CD8-positive, alpha-beta T cell (primary cell): ENCODE measurements at regions of chr10 and their contacts with region 1.

Region 1: DNA sequence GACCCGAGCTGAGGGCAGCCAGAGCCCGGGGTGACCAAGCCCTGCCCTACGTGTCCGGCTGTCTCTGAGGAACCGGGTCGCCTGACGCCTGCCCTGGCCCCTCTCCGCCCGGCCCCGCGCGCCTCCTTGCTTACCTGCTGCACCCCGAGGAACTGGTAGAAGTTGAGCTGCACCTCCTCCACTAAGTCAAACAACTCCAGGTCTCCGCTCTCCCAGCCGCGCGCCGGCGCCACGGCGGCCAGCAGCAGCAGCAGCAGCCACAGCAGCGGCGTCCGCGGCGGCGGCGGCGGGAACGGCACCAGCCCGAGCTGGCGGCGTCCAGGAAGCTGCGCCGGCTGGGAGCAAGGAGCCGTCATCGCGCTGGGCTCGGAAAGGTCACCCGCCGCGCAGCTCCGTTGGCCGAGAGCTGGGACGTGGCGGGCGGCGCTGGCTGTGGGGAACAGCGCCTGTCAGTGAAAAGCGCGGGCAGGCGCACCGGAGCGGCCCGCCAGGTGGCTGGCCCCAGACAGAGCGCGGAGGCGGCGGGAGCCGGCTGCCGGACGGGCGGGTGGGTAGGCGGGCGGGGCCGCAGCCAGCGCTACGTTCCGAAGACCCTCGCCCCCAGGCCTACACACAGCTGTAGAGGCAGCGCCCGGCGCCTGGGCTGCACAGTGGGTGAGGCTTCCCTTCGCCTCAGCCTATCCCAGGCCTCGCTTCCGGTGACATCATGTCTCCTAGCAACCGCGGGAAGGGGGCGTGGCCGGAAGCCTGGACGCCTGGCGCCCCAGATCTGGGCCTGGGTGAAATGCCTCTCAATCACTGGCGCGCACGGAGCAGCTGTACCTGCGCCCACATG is at the start of gene DNAJC1:
- DNase-seq: peak; percentile 96 to 99 (median 98)
- ATAC-seq: peak; percentile 90
- H3K4me3 ChIP-seq: peak within 1 kb of the TSS; percentile 71 to 95
- H3K4me3 Mint-ChIP-seq: peak within 1 kb of the TSS; percentile 95
- H3K27ac ChIP-seq: peak within 1 kb of the TSS; percentile 80 to 85
- H3K27ac Mint-ChIP-seq: peak within 1 kb of the TSS; percentile 94
- H3K4me1 ChIP-seq: peaks cover 16% of the 10 kb centered on the region
- H3K4me1 Mint-ChIP-seq: peaks cover 48% of the 10 kb centered on the region
- H3K27me3 ChIP-seq: no peaks in the 10 kb centered on the region
- H3K27me3 Mint-ChIP-seq: peaks cover 2% of the 10 kb centered on the region
- CTCF ChIP-seq: no peak
- total RNA-seq, gene DNAJC1: 15.3 to 18.1 TPM

Region 2: GRCh38 chr10:21355561-21356011 is 647.7 kb before region 1 on chr10:
- CTCF ChIA-PET with region 1: no interaction called
- POLR2A ChIA-PET with region 1: no interaction called
- intact Hi-C with region 1: no loop called
- DNase-seq: no peak
- ATAC-seq: no peak
- H3K4me3 ChIP-seq: no peak overlapping the region
- H3K4me3 Mint-ChIP-seq: no peak overlapping the region
- H3K27ac ChIP-seq: no peak overlapping the region
- H3K27ac Mint-ChIP-seq: no peak overlapping the region
- H3K4me1 ChIP-seq: no peaks in the 10 kb centered on the region
- H3K4me1 Mint-ChIP-seq: no peaks in the 10 kb centered on the region
- H3K27me3 ChIP-seq: peaks cover 0 to 4% of the 10 kb centered on the region in 2 experiments
- H3K27me3 Mint-ChIP-seq: peaks cover 2% of the 10 kb centered on the region
- CTCF ChIP-seq: no peak

Region 3: DNA sequence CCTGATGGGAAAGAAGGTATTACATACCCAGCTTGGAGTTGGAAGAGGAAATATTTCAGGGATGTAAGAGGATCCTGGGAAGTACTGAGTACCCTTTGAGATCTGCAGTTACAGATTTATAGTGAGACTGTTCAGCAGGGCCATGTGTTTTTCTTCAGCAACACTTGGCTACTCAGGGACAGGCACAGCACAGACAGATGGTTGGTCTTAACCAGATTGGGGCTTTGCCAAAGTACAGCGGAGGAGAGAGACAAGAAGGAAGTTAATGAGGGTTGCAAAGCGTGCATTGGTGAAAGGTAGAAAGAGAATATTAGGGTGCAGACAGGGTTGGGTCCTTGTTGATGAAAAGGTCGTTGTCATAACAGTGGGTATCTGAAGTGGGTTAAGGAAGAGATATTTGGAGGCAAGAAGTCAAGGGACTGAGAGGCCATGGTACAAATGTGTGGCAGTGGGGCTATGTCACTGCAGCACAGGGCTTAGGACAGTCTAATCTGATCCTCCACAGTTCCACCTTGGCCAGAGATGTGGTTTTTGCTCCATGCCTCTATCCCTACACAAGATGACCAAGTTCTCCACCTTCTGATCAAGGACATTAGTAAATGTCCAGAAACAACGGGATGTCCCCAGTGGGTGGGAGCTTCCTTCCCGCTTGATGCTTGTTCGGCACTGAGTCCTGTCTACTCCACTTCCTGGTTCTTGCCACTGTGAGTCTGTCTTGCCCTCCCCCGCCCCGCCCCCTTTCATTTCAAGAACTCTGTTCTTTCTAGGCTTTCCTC is 19.1 kb after region 1 on chr10:
- CTCF ChIA-PET with region 1: no interaction called
- POLR2A ChIA-PET with region 1: interaction called, 3 read pairs
- intact Hi-C with region 1: loop called in 1 of 2 experiments (anchors 2 kb)
- DNase-seq: peak; percentile 8 to 71 (median 40)
- ATAC-seq: peak; percentile 95
- H3K4me3 ChIP-seq: peak overlapping the region; percentile 23 to 33
- H3K4me3 Mint-ChIP-seq: peak overlapping the region; percentile 81
- H3K27ac ChIP-seq: peak overlapping the region; percentile 18 to 61
- H3K27ac Mint-ChIP-seq: peak overlapping the region; percentile 95
- H3K4me1 ChIP-seq: peaks cover 13% of the 10 kb centered on the region
- H3K4me1 Mint-ChIP-seq: peaks cover 15% of the 10 kb centered on the region
- H3K27me3 ChIP-seq: no peaks in the 10 kb centered on the region
- H3K27me3 Mint-ChIP-seq: no peaks in the 10 kb centered on the region
- CTCF ChIP-seq: no peak

Region 4: GRCh38 chr10:22316285-22317120 is 313.2 kb after region 1 on chr10 and contains the start of gene COMMD3:
- CTCF ChIA-PET with region 1: interaction called, 3 read pairs
- POLR2A ChIA-PET with region 1: no interaction called
- intact Hi-C with region 1: loop called (anchors 5 kb)
- DNase-seq: peak; percentile 58 to 93 (median 80)
- ATAC-seq: peak; percentile 54
- H3K4me3 ChIP-seq: peak within 1 kb of the TSS; percentile 83 to 86
- H3K4me3 Mint-ChIP-seq: peak within 1 kb of the TSS; percentile 91
- H3K27ac ChIP-seq: peak within 1 kb of the TSS; percentile 82 to 87
- H3K27ac Mint-ChIP-seq: peak within 1 kb of the TSS; percentile 95
- H3K4me1 ChIP-seq: peaks cover 27% of the 10 kb centered on the region
- H3K4me1 Mint-ChIP-seq: peaks cover 31% of the 10 kb centered on the region
- H3K27me3 ChIP-seq: peaks cover 7 to 15% of the 10 kb centered on the region in 2 experiments
- H3K27me3 Mint-ChIP-seq: peaks cover 14% of the 10 kb centered on the region
- CTCF ChIP-seq: no peak
- total RNA-seq, gene COMMD3: 19.2 to 22.1 TPM

Region 5: GRCh38 chr10:22573820-22574569 is 570.7 kb after region 1 on chr10:
- CTCF ChIA-PET with region 1: interaction called, 3 read pairs
- POLR2A ChIA-PET with region 1: no interaction called
- intact Hi-C with region 1: loop called in 1 of 2 experiments (anchors 5 kb)
- DNase-seq: peak in 7 of 9 experiments; percentile 2 to 82 (median 43)
- ATAC-seq: peak; percentile 64
- H3K4me3 ChIP-seq: no peak overlapping the region
- H3K4me3 Mint-ChIP-seq: peak overlapping the region; percentile 71
- H3K27ac ChIP-seq: peak overlapping the region in 1 of 2 experiments; percentile 63
- H3K27ac Mint-ChIP-seq: peak overlapping the region; percentile 94
- H3K4me1 ChIP-seq: peaks cover 35% of the 10 kb centered on the region
- H3K4me1 Mint-ChIP-seq: peaks cover 73% of the 10 kb centered on the region
- H3K27me3 ChIP-seq: no peaks in the 10 kb centered on the region
- H3K27me3 Mint-ChIP-seq: no peaks in the 10 kb centered on the region
- CTCF ChIP-seq: peak; percentile 79

Region 6: GRCh38 chr10:23015021-23015707 is 1011.9 kb after region 1 on chr10:
- CTCF ChIA-PET with region 1: no interaction called
- POLR2A ChIA-PET with region 1: no interaction called
- intact Hi-C with region 1: no loop called
- DNase-seq: no peak
- ATAC-seq: no peak
- H3K4me3 ChIP-seq: no peak overlapping the region
- H3K4me3 Mint-ChIP-seq: no peak overlapping the region
- H3K27ac ChIP-seq: no peak overlapping the region
- H3K27ac Mint-ChIP-seq: no peak overlapping the region
- H3K4me1 ChIP-seq: no peaks in the 10 kb centered on the region
- H3K4me1 Mint-ChIP-seq: no peaks in the 10 kb centered on the region
- H3K27me3 ChIP-seq: peaks cover 0 to 4% of the 10 kb centered on the region in 2 experiments
- H3K27me3 Mint-ChIP-seq: peaks cover 19% of the 10 kb centered on the region
- CTCF ChIP-seq: no peak

Region 7: GRCh38 chr10:23095404-23095965 is 1092.2 kb after region 1 on chr10 and contains the start of gene MSRB2:
- CTCF ChIA-PET with region 1: no interaction called
- POLR2A ChIA-PET with region 1: no interaction called
- intact Hi-C with region 1: loop called in 1 of 2 experiments (anchors 10 kb)
- DNase-seq: peak; percentile 37 to 93 (median 69)
- ATAC-seq: peak; percentile 68
- H3K4me3 ChIP-seq: peak within 1 kb of the TSS; percentile 53 to 67
- H3K4me3 Mint-ChIP-seq: peak within 1 kb of the TSS; percentile 83
- H3K27ac ChIP-seq: peak within 1 kb of the TSS; percentile 44 to 61
- H3K27ac Mint-ChIP-seq: peak within 1 kb of the TSS; percentile 85
- H3K4me1 ChIP-seq: peaks cover 15% of the 10 kb centered on the region
- H3K4me1 Mint-ChIP-seq: peaks cover 28% of the 10 kb centered on the region
- H3K27me3 ChIP-seq: no peaks in the 10 kb centered on the region
- H3K27me3 Mint-ChIP-seq: no peaks in the 10 kb centered on the region
- CTCF ChIP-seq: no peak
- total RNA-seq, gene MSRB2: 1.0 to 1.1 TPM